Psoas muscle (tissue), 8 donors: ENCODE measurements at regions of chr7 and their contacts with region 1.

Region 1: GRCh38 chr7:25851332-25852210 is 300.4 kb upstream of the NFE2L3 start:
- DNase-seq: peak; percentile 79 to 91
- ATAC-seq: peak; percentile 67 to 74 (median 67)
- H3K4me3 ChIP-seq: peak overlapping the region; percentile 33
- H3K27ac ChIP-seq: peak overlapping the region; percentile 97
- H3K4me1 ChIP-seq: peaks cover 63% of the 10 kb centered on the region
- H3K27me3 ChIP-seq: no peaks in the 10 kb centered on the region
- CTCF ChIP-seq: peak; percentile 89

Region 2: GRCh38 chr7:25125137-25125946 is 726.2 kb before region 1 on chr7 and contains the start of gene CYCS:
- intact Hi-C with region 1: loop called in 1 of 2 experiments (anchors 10 kb)
- DNase-seq: peak; percentile 99 to 100
- ATAC-seq: peak; percentile 95 to 96 (median 96)
- H3K4me3 ChIP-seq: peak within 1 kb of the TSS; percentile 83
- H3K27ac ChIP-seq: peak within 1 kb of the TSS; percentile 95
- H3K4me1 ChIP-seq: peaks cover 23% of the 10 kb centered on the region
- H3K27me3 ChIP-seq: no peaks in the 10 kb centered on the region
- CTCF ChIP-seq: no peak
- total RNA-seq, gene CYCS: 241 to 585 (median 322) TPM

Region 3: DNA sequence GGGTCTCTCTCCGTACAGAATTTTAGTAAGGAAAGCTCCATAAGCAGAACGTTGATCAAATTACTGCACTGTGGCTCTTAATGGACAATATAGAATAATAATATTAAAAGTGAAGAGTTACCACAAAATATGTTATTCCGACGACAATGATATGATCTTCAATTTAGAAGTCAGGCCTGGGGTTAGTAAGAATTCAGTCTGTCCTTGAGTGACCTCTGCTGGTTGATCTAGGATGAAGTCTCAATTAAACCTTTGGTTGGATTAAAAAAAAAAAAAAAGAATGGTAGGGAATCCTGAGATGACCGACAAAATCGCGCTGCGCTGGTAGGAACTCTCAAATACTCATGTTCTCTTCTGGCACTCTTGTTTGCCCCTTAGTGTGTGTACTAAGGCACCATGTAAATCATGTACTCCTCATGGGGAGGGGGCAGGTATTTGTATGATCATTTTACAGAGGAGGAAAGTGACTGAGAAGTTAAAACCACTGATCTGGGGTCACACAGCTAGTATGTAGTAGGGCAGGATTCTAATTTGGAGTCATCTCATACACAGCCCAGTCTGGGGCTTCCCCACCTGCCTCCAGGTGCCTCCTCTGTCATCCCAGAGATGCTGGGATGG is 462.0 kb before region 1 on chr7:
- intact Hi-C with region 1: loop called (anchors 2 to 5 kb)
- DNase-seq: no peak
- ATAC-seq: peak in 1 of 4 donors; percentile 35
- H3K4me3 ChIP-seq: no peak overlapping the region
- H3K27ac ChIP-seq: no peak overlapping the region
- H3K4me1 ChIP-seq: peaks cover 8% of the 10 kb centered on the region
- H3K27me3 ChIP-seq: no peaks in the 10 kb centered on the region
- CTCF ChIP-seq: peak; percentile 31

Region 4: DNA sequence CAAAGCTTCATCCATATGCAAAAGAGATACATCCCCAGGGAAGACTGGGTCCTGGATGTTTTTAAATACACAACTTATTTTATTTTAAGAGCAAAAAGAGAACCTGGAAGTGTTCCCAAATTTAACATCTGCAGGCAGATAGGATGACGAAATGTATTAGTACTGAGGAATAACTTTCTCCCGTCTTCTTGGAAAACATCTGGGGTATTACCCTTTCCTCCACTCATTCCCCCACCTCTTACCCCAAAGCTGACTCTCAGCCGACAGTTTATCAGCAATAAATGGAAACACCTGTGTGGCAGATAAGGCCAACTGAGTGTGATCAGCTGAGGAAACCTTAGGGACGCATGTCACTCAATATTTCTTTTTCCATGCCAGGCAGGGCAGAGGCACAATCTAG is 187.7 kb before region 1 on chr7:
- intact Hi-C with region 1: loop called in 1 of 2 experiments (anchors 5 kb)
- DNase-seq: no peak
- ATAC-seq: peak in 2 of 4 donors; percentile 20 to 26
- H3K4me3 ChIP-seq: no peak overlapping the region
- H3K27ac ChIP-seq: peak overlapping the region; percentile 57
- H3K4me1 ChIP-seq: peaks cover 23% of the 10 kb centered on the region
- H3K27me3 ChIP-seq: no peaks in the 10 kb centered on the region
- CTCF ChIP-seq: no peak

Region 5: DNA sequence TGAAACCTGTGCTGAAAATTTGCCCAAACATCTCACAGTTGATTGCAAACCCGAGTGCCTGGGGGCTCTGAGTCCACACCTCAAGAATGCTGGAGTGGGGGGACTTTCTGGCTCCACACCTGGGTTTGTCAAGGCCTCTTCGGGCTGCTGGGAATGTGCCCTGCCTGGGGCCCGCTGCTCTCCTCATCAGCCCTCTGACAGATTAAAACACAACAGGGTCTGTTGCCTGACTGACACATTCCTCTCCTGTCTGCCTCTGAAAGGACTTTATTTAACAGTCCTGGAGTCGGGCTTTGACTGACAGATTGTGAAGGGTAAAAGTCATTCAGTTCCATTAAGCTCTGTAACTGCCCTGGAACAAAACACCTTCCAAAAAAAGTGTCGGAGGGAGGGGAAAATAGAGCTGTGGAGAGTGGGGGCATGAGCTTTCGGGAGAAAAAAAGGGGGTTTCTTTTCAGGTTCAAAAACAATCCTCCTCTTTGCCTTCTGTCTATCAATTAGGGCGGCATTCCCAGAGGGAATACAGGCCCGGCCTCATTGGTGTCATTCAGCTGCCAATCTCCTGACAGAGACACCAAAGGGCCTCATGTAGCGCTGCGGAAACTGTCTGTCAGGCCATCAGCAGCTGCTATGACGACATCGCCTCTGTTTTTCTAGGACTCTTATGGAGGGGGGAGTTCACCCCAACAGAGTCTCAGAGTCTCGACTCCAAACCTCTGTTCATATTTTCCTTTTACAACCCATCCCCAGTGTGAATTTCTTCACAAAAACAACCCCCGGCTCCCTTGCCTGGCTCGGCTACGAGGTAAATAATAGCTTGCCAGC is 98.4 kb before region 1 on chr7:
- intact Hi-C with region 1: loop called in 1 of 2 experiments (anchors 5 kb)
- DNase-seq: peak; percentile 27 to 72
- ATAC-seq: peak; percentile 82 to 92 (median 90)
- H3K4me3 ChIP-seq: no peak overlapping the region
- H3K27ac ChIP-seq: peak overlapping the region; percentile 86
- H3K4me1 ChIP-seq: peaks cover 47% of the 10 kb centered on the region
- H3K27me3 ChIP-seq: no peaks in the 10 kb centered on the region
- CTCF ChIP-seq: no peak

Region 6: DNA sequence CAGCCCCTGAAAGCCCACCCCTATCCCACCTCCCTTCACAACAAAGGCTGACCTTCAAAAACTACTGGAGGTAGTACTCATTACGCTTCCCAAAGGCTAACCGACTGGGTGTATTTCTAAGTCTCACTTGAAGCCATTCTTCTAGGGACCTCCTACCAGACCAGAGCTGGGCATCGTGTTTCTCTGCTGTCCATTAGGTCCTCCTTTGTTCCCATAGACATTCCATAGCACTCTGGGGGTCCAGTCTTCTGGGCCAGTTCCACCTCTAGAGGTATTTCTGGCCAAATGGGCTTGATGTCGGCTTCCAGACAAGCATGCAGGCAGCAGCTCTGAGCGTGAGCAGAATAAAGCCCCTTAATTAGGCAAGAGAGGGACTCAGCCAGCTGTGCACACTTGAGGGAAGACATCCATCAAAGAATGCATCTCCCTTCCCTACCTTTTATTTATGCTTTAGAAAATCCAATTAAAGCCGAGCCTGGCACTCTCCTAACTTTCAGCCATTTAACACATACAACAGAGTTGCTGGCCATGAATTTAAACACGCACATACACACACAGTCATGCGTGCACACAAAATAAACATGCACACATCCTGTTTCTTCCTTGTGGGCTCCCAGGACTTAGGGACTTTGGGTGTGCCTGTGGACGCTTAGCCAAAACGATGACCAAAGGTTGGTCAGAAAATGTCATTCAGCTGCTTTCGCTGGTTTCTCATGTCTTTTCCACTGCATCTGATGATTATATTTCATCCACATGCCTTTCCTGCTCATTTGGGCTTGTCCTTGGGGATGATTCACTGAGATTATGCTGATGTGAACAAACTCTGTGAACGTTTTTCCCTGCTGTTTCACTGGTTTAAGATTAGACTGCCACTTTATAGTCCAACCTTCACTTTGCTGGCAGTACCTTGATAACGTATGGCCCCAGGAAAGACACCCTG is 61.6 kb before region 1 on chr7:
- intact Hi-C with region 1: loop called in 1 of 2 experiments (anchors 5 kb)
- DNase-seq: no peak
- ATAC-seq: no peak
- H3K4me3 ChIP-seq: no peak overlapping the region
- H3K27ac ChIP-seq: no peak overlapping the region
- H3K4me1 ChIP-seq: no peaks in the 10 kb centered on the region
- H3K27me3 ChIP-seq: no peaks in the 10 kb centered on the region
- CTCF ChIP-seq: no peak